CD4-positive, alpha-beta memory T cell (primary cell): ENCODE measurements at regions of chr10 and their contacts with region 1.

Region 1: GRCh38 chr10:100535715-100536353 is at the start of gene HIF1AN:
- DNase-seq: peak; percentile 92 to 95 (median 94)
- H3K4me3 ChIP-seq: peak within 1 kb of the TSS; percentile 48 to 69
- H3K4me3 Mint-ChIP-seq: peak within 1 kb of the TSS in 1 of 8 donors; percentile 40
- H3K27ac ChIP-seq: peak within 1 kb of the TSS; percentile 77
- H3K27ac Mint-ChIP-seq: peak within 1 kb of the TSS in 3 of 7 donors; percentile 8 to 87 (median 32)
- H3K4me1 ChIP-seq: peaks cover 34% of the 10 kb centered on the region
- H3K4me1 Mint-ChIP-seq: peaks cover 12 to 23% (median 18%) of the 10 kb centered on the region in 4 donors
- H3K27me3 ChIP-seq: no peaks in the 10 kb centered on the region
- H3K27me3 Mint-ChIP-seq: no peaks in the 10 kb centered on the region
- total RNA-seq, gene HIF1AN: 69.6 to 69.8 TPM

Region 2: GRCh38 chr10:100524638-100525037 is 11.2 kb before region 1 on chr10:
- CTCF ChIA-PET with region 1: interaction called, 13 read pairs
- POLR2A ChIA-PET with region 1: interaction called, 7 read pairs
- intact Hi-C with region 1: no loop called
- DNase-seq: no peak
- H3K4me3 ChIP-seq: no peak overlapping the region
- H3K4me3 Mint-ChIP-seq: peak overlapping the region in 1 of 8 donors; percentile 24
- H3K27ac ChIP-seq: no peak overlapping the region
- H3K27ac Mint-ChIP-seq: peak overlapping the region in 1 of 7 donors; percentile 64
- H3K4me1 ChIP-seq: peaks cover 26% of the 10 kb centered on the region
- H3K4me1 Mint-ChIP-seq: peaks cover 14 to 36% (median 24%) of the 10 kb centered on the region in 4 donors
- H3K27me3 ChIP-seq: no peaks in the 10 kb centered on the region
- H3K27me3 Mint-ChIP-seq: no peaks in the 10 kb centered on the region

Region 3: GRCh38 chr10:100637785-100638184 is 102.0 kb after region 1 on chr10:
- CTCF ChIA-PET with region 1: no interaction called
- POLR2A ChIA-PET with region 1: no interaction called
- intact Hi-C with region 1: no loop called
- DNase-seq: no peak
- H3K4me3 ChIP-seq: no peak overlapping the region
- H3K4me3 Mint-ChIP-seq: no peak overlapping the region
- H3K27ac ChIP-seq: no peak overlapping the region
- H3K27ac Mint-ChIP-seq: no peak overlapping the region
- H3K4me1 ChIP-seq: no peaks in the 10 kb centered on the region
- H3K4me1 Mint-ChIP-seq: no peaks in the 10 kb centered on the region
- H3K27me3 ChIP-seq: peaks cover 6% of the 10 kb centered on the region
- H3K27me3 Mint-ChIP-seq: peaks cover 43 to 49% of the 10 kb centered on the region in 2 donors

Region 4: GRCh38 chr10:100827819-100828737 is 292.2 kb after region 1 on chr10:
- CTCF ChIA-PET with region 1: no interaction called
- POLR2A ChIA-PET with region 1: no interaction called
- intact Hi-C with region 1: loop called (anchors 1 kb)
- DNase-seq: peak in 4 of 5 donors; percentile 12 to 47 (median 16)
- H3K4me3 ChIP-seq: peak overlapping the region; percentile 11 to 23
- H3K4me3 Mint-ChIP-seq: peak overlapping the region; percentile 83 to 94 (median 87)
- H3K27ac ChIP-seq: no peak overlapping the region
- H3K27ac Mint-ChIP-seq: no peak overlapping the region
- H3K4me1 ChIP-seq: peaks cover 29% of the 10 kb centered on the region
- H3K4me1 Mint-ChIP-seq: peaks cover 14 to 48% (median 24%) of the 10 kb centered on the region in 4 donors
- H3K27me3 ChIP-seq: peaks cover 55% of the 10 kb centered on the region
- H3K27me3 Mint-ChIP-seq: peaks cover 58 to 76% of the 10 kb centered on the region in 2 donors